ENCODE measurements at regions of chr22 and their contacts with region 1.

Region 1: DNA sequence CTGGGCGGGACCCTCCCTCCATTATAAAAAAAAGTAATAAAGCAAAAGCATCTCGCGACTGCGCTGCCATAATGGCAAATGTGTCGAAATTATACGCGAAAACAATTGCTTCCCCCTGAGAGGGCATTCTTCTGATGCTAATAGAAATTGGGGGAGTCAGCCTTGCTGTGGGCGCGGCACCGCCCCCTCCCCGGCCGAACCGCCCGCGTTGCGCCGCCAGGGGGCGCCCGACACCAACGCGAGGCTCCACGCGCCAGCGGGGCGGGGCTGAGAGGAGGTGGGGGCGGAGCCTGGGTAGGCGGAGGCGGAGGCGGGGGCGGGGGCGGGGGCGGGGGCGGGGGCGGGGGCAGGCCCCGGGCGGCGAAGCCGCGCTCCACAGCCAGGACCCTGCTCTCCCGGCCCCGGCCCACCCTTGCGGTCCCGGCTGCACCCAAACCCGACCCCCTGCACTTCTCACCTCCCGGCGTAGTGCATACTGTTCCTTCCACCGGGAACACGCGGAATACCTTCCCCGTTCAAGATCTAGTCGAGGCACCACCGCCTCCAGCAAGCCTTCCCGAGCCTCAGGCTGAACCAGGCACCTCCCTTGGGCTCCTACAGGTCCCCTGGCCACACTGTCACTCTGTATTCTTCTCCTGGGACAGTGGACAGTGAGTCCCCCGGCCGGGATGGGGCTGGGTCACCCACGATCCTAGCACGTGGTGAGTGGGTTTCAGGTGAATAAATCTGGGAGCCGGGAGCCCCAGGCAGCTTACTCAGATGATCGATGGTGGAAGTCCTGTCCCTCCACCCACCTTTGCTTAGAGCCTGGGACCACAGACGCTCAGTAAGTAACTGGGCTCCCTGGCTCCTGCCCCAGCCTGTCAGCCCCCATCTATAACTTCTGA is 15.5 kb upstream of the UPK3A start:
- DNase-seq: peak; percentile 85
- H3K4me3 ChIP-seq: peak overlapping the region; percentile 36 to 52
- H3K27ac ChIP-seq: peak overlapping the region; percentile 78 to 83
- H3K4me1 ChIP-seq: peaks cover 11% of the 10 kb centered on the region
- H3K27me3 ChIP-seq: no peaks in the 10 kb centered on the region
- CTCF ChIP-seq: peak; percentile 94 to 99 (median 98)
- POLR2A ChIP-seq: peak; percentile 52

Region 2: DNA sequence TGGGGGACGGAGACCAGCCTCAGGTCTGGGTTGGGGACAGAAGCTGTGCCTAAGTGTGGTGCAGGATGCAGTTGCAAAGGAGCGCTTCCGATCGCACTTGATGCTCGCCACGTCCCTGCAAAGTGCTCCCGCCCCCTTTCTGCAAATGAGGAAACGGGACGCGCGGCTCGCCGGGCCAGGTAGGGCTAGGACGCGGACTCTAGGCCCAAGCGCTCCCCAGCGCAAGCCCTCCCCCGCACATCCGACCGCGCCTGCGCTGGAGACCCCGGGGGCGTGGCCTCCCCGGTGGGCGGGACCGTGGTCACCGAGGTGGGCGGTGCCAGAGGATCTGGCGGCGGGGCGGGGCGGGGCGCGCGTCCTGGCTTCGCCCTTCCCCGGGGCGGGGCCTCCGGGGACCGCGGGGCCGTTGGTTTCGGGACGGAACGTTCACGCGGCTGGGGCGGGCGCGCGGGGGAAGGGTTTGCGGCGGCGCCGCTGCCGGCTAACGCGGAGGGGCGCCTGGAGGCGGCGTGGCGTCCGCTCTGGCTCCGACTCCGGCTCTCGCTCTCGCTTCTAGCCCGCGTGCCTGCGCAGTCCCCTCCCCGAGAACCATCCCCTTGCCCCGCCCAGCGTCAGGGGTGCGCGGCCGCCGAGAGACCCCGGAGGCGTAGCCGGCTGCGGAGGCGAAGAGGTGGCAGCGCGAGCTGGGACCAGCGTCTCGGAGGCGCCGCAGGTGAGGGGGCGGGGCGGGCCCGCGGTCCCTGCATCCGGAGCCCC is 40.4 kb after region 1 on chr22 and contains the start of gene FAM118A:
- intact Hi-C with region 1: loop called (anchors 2 kb)
- DNase-seq: peak; percentile 94
- H3K4me3 ChIP-seq: peak within 1 kb of the TSS; percentile 95 to 96
- H3K27ac ChIP-seq: peak within 1 kb of the TSS; percentile 87 to 96
- H3K4me1 ChIP-seq: peaks cover 7% of the 10 kb centered on the region
- H3K27me3 ChIP-seq: no peaks in the 10 kb centered on the region
- CTCF ChIP-seq: peak in 3 of 4 experiments; percentile 24 to 43 (median 42)
- POLR2A ChIP-seq: peak; percentile 89
- total RNA-seq, gene FAM118A: 60.8 to 215 TPM

Region 3: DNA sequence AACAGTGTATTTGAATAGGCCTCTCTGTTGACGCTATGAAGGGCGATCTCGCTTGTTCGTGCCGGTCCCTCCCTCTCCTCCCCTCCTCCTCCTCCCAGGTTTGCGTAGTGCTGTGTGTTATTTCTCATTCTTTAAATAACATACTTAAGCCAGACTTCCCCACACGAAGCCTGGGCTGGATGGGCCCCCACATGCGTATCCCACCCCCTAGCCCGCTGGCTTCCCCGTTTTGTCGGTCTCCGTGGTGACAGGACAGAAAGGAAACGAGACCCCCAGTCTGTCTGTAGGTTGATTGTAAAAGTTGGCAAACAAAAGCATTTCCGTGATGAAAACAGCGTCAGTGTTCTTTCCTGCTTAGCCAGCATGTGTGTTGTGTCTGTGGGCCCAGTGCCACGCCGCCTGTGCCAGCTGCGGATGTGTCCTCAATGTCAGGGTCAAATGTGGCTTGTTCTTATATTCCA is 67.8 kb after region 1 on chr22:
- intact Hi-C with region 1: no loop called
- DNase-seq: peak; percentile 90
- H3K4me3 ChIP-seq: peak overlapping the region in 1 of 2 donors; percentile 18
- H3K27ac ChIP-seq: peak overlapping the region; percentile 85 to 89
- H3K4me1 ChIP-seq: peaks cover 36% of the 10 kb centered on the region
- H3K27me3 ChIP-seq: no peaks in the 10 kb centered on the region
- CTCF ChIP-seq: no peak
- POLR2A ChIP-seq: no peak

Region 4: DNA sequence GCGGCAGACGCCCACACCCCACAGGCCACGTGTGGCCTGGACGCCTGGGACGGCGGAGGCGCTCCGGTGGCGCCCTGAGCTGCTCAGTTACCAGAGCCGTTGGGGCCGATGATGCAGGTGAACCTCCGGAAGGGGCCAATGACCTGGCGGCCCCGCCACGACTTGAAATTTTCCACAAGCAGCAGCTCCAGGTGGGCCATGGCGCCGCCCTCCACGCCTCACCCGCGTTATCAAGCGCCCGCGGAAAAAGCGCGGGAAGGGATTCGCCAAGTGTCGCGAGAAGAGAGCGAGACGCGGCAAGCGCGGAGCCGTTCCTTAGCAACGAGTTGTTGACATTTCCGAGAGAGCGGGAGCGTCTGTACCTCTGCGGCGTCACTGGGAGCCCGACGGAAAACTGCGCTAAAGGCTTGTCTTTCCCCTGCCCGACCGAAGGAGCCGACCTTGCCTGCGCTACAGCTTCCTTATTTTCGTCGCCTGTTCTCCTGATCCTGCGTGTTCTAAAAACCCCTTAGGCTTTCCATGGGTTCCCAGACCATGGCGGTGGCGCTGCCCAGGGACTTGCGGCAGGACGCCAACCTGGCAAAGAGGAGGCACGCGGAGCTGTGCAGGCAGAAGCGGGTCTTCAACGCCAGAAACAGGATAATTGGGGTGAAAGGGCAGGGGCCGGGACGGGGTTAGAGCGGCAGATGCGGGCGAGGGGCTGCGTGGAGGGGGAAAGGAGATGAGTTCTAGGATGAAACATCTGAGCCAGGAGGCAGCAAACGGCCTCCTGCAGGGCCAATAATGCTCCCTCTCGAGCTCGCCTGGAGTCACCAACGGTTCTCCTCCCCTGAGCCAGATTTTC is 144.4 kb after region 1 on chr22 and contains the starts of genes RIBC2 and SMC1B:
- intact Hi-C with region 1: no loop called
- DNase-seq: peak; percentile 78
- H3K4me3 ChIP-seq: peak within 1 kb of the TSS; percentile 35 to 40
- H3K27ac ChIP-seq: peak within 1 kb of the TSS; percentile 62 to 68
- H3K4me1 ChIP-seq: no peaks in the 10 kb centered on the region
- H3K27me3 ChIP-seq: no peaks in the 10 kb centered on the region
- CTCF ChIP-seq: peak in 1 of 4 experiments; percentile 14
- POLR2A ChIP-seq: no peak
- total RNA-seq, gene RIBC2: 6.0 to 7.4 TPM
- total RNA-seq, gene SMC1B: 8.2 TPM in 1 of 2 donors, not detected in the other

Region 5: GRCh38 chr22:45435544-45436139 is 166.4 kb after region 1 on chr22:
- intact Hi-C with region 1: loop called (anchors 1 kb)
- DNase-seq: peak; percentile 92
- H3K4me3 ChIP-seq: no peak overlapping the region
- H3K27ac ChIP-seq: peak overlapping the region; percentile 77
- H3K4me1 ChIP-seq: peaks cover 7% of the 10 kb centered on the region
- H3K27me3 ChIP-seq: no peaks in the 10 kb centered on the region
- CTCF ChIP-seq: peak; percentile 93 to 99 (median 98)
- POLR2A ChIP-seq: peak; percentile 17

Region 6: GRCh38 chr22:45553351-45554039 is 284.3 kb after region 1 on chr22:
- intact Hi-C with region 1: loop called (anchors 2 kb)
- DNase-seq: peak; percentile 80
- H3K4me3 ChIP-seq: no peak overlapping the region
- H3K27ac ChIP-seq: peak overlapping the region; percentile 70 to 75
- H3K4me1 ChIP-seq: peaks cover 6% of the 10 kb centered on the region
- H3K27me3 ChIP-seq: no peaks in the 10 kb centered on the region
- CTCF ChIP-seq: peak; percentile 83 to 97 (median 94)
- POLR2A ChIP-seq: no peak

Measured in prostate gland (tissue), 2 donors.